ENCODE measurements at regions of chr10 and their contacts with region 1.

Region 1: GRCh38 chr10:91551856-91552255 is 81.0 kb downstream of the PPP1R3C start:
- DNase-seq: no peak
- H3K4me3 ChIP-seq: no peak overlapping the region
- H3K27me3 ChIP-seq: no peaks in the 10 kb centered on the region
- CTCF ChIP-seq: peak; percentile 74

Region 2: GRCh38 chr10:91434041-91434440 is 117.8 kb before region 1 on chr10:
- CTCF ChIA-PET with region 1: no interaction called
- POLR2A ChIA-PET with region 1: no interaction called
- DNase-seq: no peak
- H3K4me3 ChIP-seq: no peak overlapping the region
- H3K27me3 ChIP-seq: no peaks in the 10 kb centered on the region
- CTCF ChIP-seq: no peak

Region 3: DNA sequence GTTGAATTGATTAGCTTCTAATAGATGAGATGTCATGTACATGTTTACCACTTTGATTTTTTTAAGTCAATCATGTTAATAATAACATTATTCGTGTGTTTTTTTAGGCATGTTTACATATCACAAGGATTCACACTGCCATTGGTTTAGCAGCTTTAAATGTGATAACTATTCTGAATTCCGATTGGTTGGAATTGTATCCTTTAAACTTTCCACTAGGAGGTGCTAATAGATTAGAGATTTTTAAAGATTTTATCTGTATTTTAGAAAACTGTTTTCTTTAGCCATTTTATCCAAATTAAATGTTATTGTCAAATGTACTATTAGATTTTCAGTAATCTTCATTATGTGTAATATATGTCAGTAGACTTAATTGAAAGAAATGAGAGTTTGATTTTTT is 58.5 kb before region 1 on chr10:
- CTCF ChIA-PET with region 1: interaction called, 15 read pairs
- POLR2A ChIA-PET with region 1: no interaction called
- DNase-seq: no peak
- H3K4me3 ChIP-seq: no peak overlapping the region
- H3K27me3 ChIP-seq: no peaks in the 10 kb centered on the region
- CTCF ChIP-seq: peak; percentile 37

Region 4: DNA sequence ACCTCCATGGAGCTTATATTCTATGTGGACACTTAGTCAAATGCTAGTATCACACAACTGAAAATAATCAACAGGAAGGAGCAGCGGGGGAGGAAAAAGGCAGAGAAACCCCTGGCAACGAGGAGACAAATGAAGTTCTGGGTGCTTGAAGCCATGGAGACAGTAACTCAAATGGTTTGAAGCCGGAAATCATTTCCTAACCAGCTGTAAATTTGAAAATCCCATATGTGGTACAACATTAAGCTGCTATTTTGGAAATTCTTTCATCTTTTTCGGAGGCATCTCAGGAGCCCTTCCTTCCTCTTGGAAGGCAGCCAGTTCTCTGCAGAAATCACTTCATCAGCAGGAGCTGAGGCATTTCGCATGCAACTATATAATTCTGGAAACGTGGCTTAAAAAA is 10.4 kb before region 1 on chr10:
- CTCF ChIA-PET with region 1: interaction called, 36 read pairs
- POLR2A ChIA-PET with region 1: no interaction called
- DNase-seq: no peak
- H3K4me3 ChIP-seq: no peak overlapping the region
- H3K27me3 ChIP-seq: no peaks in the 10 kb centered on the region
- CTCF ChIP-seq: no peak

Region 5: GRCh38 chr10:91627344-91628102 is 75.7 kb after region 1 on chr10:
- CTCF ChIA-PET with region 1: interaction called, 84 read pairs
- POLR2A ChIA-PET with region 1: no interaction called
- DNase-seq: no peak
- H3K4me3 ChIP-seq: no peak overlapping the region
- H3K27me3 ChIP-seq: no peaks in the 10 kb centered on the region
- CTCF ChIP-seq: peak; percentile 21; the same call in 1 of the 2 replicates

Region 6: DNA sequence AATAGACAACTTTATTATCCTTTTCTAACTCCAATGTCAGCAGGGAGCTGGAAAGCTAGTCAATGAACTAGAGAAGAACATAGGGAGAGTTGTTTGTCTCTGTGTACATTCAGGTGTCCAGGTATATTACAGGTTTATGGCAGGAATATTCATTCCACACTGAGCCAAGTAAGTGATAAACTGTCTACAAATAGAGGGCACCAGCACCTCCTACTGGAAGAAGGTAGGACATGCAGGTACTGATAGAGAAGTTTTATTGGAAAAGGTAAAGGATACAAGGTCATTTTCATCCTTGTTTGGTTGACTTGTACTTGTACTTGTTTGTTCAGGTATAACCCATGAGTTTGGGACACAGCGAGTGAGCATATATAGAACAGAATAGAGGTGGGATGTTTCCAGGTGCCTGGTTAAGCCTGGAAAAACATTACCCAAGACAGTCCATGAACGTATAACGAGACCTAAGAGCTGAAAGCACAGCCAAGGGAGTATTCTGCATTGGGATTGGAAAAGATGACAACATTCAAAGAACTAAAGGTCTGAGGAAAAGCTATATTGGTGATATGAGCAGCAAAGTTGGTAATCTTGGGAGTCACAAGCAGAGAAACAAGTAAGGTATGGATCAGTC is 142.4 kb after region 1 on chr10:
- CTCF ChIA-PET with region 1: interaction called, 12 read pairs
- POLR2A ChIA-PET with region 1: no interaction called
- DNase-seq: no peak
- H3K4me3 ChIP-seq: no peak overlapping the region
- H3K27me3 ChIP-seq: no peaks in the 10 kb centered on the region
- CTCF ChIP-seq: peak; percentile 82

Measured in BJ (cell line).